Sciatic nerve (tissue), 2 donors: ENCODE measurements at regions of chr14 and their contacts with region 1.

Region 1: GRCh38 chr14:45065540-45065939 is 18.4 kb upstream of the PRPF39 start:
- DNase-seq: no peak
- ATAC-seq: no peak

Region 2: DNA sequence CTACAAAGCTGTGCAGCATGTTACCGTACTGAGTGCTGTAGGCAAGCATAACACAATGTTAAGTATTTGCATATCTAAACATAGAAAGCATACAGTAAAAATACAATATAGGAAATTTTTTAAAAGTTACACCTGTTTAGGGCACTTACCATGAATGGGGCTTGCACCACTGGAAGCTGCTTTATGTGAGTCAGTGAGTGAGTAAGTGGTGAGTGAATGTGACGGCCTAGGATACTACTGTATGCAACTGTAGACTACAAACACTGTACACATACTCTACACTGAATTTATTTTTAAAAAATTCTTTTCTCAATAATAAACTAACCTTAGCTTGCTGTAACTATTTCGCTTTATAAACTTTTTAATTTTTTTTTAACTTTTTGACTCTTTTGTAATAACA is 476.4 kb before region 1 on chr14:
- intact Hi-C with region 1: loop called (anchors 5 kb)
- DNase-seq: no peak
- ATAC-seq: no peak

Region 3: DNA sequence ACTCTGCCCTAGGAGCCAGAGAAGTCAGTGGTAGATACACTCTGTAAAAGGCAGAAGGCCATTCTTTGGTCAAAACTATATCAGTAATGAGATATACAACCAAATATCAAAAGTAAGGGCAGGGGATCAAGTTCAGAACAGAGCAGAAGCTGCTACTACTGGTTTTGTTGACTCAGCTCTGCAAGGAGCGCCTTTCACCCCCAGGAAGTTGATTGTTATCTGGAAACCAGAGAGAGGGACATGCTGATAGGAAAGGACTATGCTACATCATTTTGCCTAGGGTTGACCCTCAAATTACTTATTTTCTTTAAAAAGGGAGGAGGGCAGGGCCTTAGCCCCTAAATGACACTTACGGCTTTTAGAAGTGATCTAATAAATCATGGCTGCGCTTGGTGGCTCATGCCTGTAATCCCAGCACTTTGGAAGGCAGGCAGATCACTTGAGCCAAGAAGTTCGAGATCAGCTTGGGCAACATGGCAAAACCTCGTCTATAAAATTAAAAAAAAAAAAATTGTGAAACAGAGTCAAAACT is 297.8 kb before region 1 on chr14:
- intact Hi-C with region 1: no loop called
- DNase-seq: no peak
- ATAC-seq: no peak

Region 4: GRCh38 chr14:45051180-45051579 is 14.4 kb before region 1 on chr14:
- intact Hi-C with region 1: loop called (anchors 1 kb)
- DNase-seq: no peak
- ATAC-seq: no peak

Region 5: GRCh38 chr14:45212231-45212630 is 146.7 kb after region 1 on chr14:
- intact Hi-C with region 1: no loop called
- DNase-seq: no peak
- ATAC-seq: no peak